Gastrocnemius medialis (tissue), 4 donors: ENCODE measurements at regions of chr1 and their contacts with region 1.

Region 1: DNA sequence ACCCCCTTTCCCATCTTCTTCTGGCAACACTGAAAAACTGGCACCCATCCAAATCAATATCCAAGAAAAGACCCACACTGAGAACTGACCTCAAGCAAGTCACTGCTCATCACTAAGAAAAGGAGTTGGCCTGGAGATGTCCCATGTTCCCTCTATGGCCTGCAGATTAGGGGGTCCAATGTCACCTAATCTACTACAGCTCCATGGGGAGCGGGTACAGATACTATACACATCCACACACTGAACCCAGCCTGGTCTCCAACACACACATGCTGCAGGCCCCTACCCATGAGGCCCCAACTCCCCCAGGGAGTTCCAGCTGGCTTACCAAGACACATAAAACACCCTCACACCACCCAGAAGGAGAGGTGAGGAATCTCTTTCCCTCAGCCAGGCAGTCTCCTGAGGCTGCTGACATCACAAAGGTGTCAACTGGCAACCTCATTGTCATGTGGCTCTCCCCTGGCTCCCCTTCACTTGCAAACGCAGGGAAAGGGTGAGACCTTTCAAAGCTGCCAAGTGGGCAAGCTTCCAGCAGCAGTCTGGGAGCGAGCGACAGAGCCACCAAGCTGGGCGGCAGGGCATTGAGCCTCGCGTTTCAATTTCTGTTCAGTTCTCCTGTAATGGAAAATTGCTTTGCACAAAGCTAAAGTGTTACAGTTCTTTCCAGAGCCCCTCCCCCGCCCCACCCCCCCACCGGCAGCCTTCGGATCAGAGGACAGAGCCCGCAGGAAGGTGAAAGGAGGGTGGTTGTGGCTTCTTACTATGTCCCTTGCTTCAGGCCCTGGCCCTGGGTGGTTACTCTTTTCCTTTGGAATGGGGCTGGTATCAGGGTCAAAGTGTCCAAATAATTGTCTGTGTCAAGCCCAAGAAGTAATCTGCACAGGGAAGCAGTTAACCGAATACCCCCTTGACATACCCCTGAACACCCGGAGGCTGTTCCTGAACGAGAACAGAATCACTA is at the start of gene LRRC52:
- DNase-seq: peak; percentile 72 to 92
- ATAC-seq: peak; percentile 41 to 72
- H3K4me3 ChIP-seq: peak within 1 kb of the TSS in 1 of 4 donors; percentile 7
- H3K27ac ChIP-seq: peak within 1 kb of the TSS; percentile 79 to 93 (median 85)
- H3K4me1 ChIP-seq: peaks cover 42 to 46% of the 10 kb centered on the region in 2 donors
- H3K27me3 ChIP-seq: no peaks in the 10 kb centered on the region
- CTCF ChIP-seq: peak in 2 of 5 experiments; percentile 30 to 40
- POLR2A ChIP-seq: peak in 1 of 2 donors; percentile 26
- total RNA-seq, gene LRRC52: 0.35 TPM in 1 of 4 donors, not detected in the others

Region 2: GRCh38 chr1:165403835-165404482 is 139.9 kb before region 1 on chr1:
- in situ Hi-C with region 1: no loop called
- intact Hi-C with region 1: loop called (anchors 1 kb)
- DNase-seq: peak in 1 of 2 donors; percentile 28
- ATAC-seq: peak; percentile 46 to 51
- H3K4me3 ChIP-seq: no peak overlapping the region
- H3K27ac ChIP-seq: no peak overlapping the region
- H3K4me1 ChIP-seq: peaks cover 0 to 13% of the 10 kb centered on the region in 2 donors
- H3K27me3 ChIP-seq: no peaks in the 10 kb centered on the region
- CTCF ChIP-seq: peak; percentile 63 to 80 (median 76)
- POLR2A ChIP-seq: no peak

Region 3: DNA sequence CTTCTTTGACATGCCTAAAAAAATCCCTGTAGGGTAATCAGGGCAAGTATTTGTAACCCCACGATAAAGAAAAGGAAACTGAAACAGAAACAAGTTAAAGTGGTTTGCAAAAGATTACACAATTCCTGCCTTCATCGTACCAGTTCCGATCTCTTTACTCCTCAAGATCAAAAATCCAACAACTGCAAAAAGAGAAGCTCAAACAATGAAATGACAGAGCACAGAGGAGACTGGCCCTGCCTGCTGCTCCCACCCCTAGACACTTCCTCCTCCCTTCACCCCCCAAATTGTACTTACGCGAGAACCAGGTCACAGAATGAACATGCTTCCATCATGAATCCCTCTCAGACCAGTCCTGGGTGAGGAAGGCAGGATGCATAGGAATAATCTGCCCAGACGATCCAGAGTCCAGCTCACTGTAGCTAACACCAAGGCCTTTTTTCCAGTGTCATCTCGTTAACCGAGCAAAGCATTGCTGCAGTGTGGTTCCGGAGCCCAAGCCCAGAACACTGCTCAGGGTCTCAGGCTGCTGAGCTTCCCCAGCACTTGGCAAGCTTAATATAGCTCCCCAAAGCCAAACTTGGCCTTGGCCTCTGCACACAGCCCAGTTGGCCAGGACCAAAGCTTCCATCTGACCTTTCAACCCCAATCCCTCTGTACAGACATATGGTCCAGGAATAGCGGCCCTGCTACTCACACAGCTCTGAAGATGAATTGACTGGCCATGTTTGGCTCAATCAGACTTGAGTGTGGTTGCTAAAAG is 119.2 kb before region 1 on chr1:
- in situ Hi-C with region 1: no loop called
- intact Hi-C with region 1: loop called (anchors 5 kb)
- DNase-seq: no peak
- ATAC-seq: peak; percentile 43 to 73
- H3K4me3 ChIP-seq: peak overlapping the region; percentile 24 to 53 (median 36)
- H3K27ac ChIP-seq: peak overlapping the region; percentile 70 to 84 (median 78)
- H3K4me1 ChIP-seq: peaks cover 67 to 73% of the 10 kb centered on the region in 2 donors
- H3K27me3 ChIP-seq: no peaks in the 10 kb centered on the region
- CTCF ChIP-seq: no peak
- POLR2A ChIP-seq: no peak

Region 4: GRCh38 chr1:165501970-165502348 is 41.9 kb before region 1 on chr1:
- in situ Hi-C with region 1: loop called in 1 of 4 experiments (anchors 5 kb)
- intact Hi-C with region 1: loop called (anchors 2 kb)
- DNase-seq: peak; percentile 19 to 33
- ATAC-seq: peak; percentile 63 to 65
- H3K4me3 ChIP-seq: no peak overlapping the region
- H3K27ac ChIP-seq: peak overlapping the region; percentile 81 to 89 (median 84)
- H3K4me1 ChIP-seq: peaks cover 19 to 20% of the 10 kb centered on the region in 2 donors
- H3K27me3 ChIP-seq: no peaks in the 10 kb centered on the region
- CTCF ChIP-seq: no peak
- POLR2A ChIP-seq: no peak

Region 5: DNA sequence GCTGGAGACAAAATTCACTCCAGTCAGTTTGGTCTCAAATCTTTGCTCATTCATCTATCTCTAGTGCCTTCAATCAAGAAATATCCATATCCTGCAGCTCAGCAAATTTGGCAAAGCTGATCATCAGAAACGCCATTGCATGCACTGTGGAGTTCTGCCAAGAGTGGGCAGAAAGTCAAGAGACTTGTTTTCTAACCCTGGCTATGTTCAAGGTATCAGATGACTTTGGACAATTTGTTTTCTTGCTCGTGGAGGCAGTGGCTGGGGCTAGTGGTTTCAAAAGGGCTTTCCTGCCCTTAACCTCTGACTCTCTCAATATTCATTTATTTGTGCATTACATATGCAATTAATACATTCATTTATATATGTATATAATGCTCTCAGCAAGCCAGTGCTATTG is 12.8 kb before region 1 on chr1:
- in situ Hi-C with region 1: no loop called
- intact Hi-C with region 1: no loop called
- DNase-seq: peak; percentile 51 to 62
- ATAC-seq: peak; percentile 97
- H3K4me3 ChIP-seq: no peak overlapping the region
- H3K27ac ChIP-seq: peak overlapping the region; percentile 36 to 77 (median 60)
- H3K4me1 ChIP-seq: peaks cover 39 to 45% of the 10 kb centered on the region in 2 donors
- H3K27me3 ChIP-seq: no peaks in the 10 kb centered on the region
- CTCF ChIP-seq: no peak
- POLR2A ChIP-seq: no peak